BJ (cell line): ENCODE measurements at regions of chr5 and their contacts with region 1.

Region 1: GRCh38 chr5:522899-523440 is 1.3 kb downstream of the SLC9A3 start:
- DNase-seq: no peak
- H3K4me3 ChIP-seq: no peak overlapping the region
- H3K27me3 ChIP-seq: peaks cover 41% of the 10 kb centered on the region
- CTCF ChIP-seq: no peak

Region 2: DNA sequence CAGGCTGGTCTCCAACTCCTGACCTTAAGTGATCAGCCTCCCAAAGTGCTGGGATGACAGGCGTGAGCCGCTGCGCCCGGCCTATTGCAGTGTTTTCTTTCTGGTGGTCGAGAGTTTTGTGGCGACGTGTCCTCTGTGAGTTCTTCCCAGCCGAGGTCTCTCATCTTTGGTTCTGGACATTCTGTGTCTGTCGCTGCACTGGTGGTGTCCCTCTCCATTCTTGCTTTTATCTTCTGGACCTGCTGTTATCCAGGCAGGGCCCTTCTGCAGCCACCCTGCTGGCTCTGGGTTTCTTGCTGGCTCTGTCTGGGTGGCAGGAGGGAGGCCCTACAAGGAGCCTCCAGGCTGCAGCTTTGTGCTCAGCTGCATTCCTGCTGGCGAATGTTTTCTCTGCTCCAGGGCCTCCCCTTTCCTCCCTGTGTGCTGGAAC is 129.1 kb before region 1 on chr5:
- CTCF ChIA-PET with region 1: no interaction called
- POLR2A ChIA-PET with region 1: interaction called, 12 read pairs
- DNase-seq: no peak
- H3K4me3 ChIP-seq: no peak overlapping the region
- H3K27me3 ChIP-seq: no peaks in the 10 kb centered on the region
- CTCF ChIP-seq: no peak

Region 3: DNA sequence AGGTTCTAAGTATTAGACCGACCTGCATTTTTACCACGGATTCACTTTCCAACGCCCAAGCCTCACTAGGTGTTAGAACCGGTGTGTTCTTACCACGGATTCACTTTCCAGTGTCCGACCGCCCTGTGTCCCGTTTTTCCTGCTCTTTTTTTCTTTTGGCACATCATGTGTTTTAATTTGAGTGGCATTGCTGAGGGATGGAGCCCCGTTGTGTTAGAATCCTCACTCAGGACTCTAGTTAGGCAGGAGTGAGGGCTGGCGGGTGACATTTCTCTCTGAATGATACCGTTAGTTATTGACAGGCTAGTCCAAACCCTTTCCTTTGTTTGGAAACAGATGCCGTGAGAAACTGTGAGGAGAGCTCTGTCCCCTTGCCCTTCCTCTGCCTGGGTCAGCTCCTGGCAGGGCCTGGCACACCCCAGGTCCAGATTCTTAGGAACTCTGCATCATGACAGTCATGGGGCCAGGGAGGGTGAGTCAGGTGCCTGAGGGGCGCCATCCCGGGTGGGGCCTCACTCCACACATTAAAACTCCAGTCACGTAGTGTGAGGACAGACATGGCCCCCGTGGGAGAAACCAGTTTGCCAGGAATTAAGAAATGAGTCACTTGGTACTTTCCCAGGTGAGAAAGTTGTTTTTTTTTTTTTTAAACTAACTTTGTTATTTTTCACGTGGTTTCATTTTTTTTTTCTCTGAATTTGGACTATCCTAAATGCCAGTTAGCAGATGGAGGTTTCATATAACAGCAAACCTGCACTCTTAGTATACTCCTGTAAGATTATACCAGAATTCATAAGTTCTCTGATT is 64.2 kb before region 1 on chr5:
- CTCF ChIA-PET with region 1: no interaction called
- POLR2A ChIA-PET with region 1: interaction called, 14 read pairs
- DNase-seq: peak; percentile 31
- H3K4me3 ChIP-seq: no peak overlapping the region
- H3K27me3 ChIP-seq: no peaks in the 10 kb centered on the region
- CTCF ChIP-seq: no peak

Region 4: DNA sequence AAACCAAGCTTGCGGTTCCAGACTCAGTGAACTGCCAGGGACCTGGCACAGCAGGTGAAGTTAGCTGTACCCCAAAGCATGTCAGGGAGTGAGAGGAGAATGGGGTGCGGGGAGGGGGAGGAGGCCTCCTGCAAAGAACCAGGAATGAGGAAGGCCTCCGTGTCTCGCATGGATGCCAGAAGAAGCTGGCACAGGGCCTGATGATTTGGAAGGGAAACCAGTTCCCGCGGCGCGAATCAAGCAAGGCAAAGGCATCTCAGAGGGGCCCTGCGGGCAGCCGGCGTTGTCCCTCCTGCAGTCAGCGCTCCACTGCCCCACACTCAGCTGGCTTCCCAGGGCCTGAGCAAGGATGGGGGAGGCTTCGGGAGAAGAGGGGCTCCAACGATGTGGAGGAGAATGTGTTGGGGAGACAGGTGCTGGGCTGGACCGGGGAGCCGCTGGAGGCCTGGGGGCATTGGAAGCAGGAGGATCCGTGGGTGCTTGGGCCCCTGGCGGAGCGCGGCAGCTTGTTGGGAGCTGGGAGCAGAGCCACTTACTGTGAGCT is 13.3 kb before region 1 on chr5:
- CTCF ChIA-PET with region 1: no interaction called
- POLR2A ChIA-PET with region 1: no interaction called
- DNase-seq: no peak
- H3K4me3 ChIP-seq: no peak overlapping the region
- H3K27me3 ChIP-seq: peaks cover 8% of the 10 kb centered on the region
- CTCF ChIP-seq: no peak

Region 5: DNA sequence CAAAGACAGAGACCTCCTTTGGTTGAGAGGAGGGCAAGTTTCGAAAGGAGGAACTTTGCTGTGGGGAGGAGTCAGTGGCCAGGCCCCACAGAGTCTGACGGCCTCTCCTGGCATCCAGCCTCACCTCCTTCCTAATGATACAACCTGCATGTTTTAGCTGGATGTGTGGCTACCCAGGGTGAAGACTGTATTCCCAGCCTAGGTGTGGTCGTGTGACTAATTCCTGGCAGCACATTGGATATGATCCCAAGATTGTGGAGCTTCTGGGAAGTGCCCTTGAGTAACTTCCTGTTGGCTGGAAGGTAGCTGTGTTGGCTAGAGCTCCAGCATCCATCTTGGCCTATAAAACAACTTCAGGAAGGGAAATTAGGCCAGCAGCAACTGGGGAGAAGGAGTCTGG is 1019.8 kb after region 1 on chr5:
- CTCF ChIA-PET with region 1: no interaction called
- POLR2A ChIA-PET with region 1: no interaction called
- DNase-seq: no peak
- H3K4me3 ChIP-seq: no peak overlapping the region
- H3K27me3 ChIP-seq: no peaks in the 10 kb centered on the region; the same call in 1 of the 2 replicates
- CTCF ChIP-seq: no peak